Caco-2 (cell line): ENCODE measurements at regions of chr11 and their contacts with region 1.

Region 1: DNA sequence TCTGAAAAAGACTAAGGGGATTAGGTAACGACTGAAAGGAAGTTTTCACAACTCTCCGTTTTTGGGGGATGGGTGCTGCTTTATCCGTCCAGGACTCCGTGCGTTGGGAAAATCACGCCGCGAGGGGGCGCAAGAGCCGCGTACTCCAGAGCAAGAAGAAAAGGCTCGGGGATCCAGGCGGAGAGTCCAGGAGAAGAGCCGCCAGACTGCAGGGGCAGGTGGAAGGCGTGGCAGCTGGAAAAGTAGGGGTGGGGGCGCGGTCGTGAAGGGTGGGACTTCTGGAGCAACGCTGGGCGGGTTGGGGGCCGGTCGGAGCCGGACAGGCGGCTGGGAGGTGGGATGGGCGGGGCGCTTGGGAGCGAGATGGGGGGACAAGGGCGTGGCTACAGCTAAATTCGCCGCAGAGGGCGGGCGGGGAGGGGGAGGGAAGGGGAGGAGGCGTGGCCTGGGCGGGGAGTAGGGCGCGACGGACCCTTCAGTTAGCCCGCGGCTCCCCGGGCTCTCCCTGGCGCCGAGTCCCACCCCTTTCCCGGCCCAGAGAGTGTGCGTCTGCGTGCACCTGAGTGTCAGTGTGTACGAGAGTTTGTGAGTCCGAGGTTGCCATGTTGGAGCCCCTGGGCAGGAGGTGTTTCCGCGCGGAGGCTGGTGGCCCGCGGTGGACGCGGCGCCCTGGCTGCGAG is 613 bp upstream of the ARHGEF17 start:
- DNase-seq: peak; percentile 100
- H3K4me3 ChIP-seq: peak overlapping the region; percentile 94
- H3K4me3 Mint-ChIP-seq: peak overlapping the region; percentile 76
- H3K27ac Mint-ChIP-seq: peak overlapping the region; percentile 87
- H3K4me1 ChIP-seq: peaks cover 31% of the 10 kb centered on the region
- H3K4me1 Mint-ChIP-seq: peaks cover 32% of the 10 kb centered on the region
- H3K27me3 ChIP-seq: no peaks in the 10 kb centered on the region
- H3K27me3 Mint-ChIP-seq: no peaks in the 10 kb centered on the region
- CTCF ChIP-seq: peak; percentile 96 to 98

Region 2: GRCh38 chr11:72848846-72849466 is 458.5 kb before region 1 on chr11:
- CTCF ChIA-PET with region 1: no interaction called
- POLR2A ChIA-PET with region 1: no interaction called
- intact Hi-C with region 1: no loop called
- DNase-seq: peak in 1 of 2 experiments; percentile 72
- H3K4me3 ChIP-seq: no peak overlapping the region
- H3K4me3 Mint-ChIP-seq: no peak overlapping the region
- H3K27ac Mint-ChIP-seq: no peak overlapping the region
- H3K4me1 ChIP-seq: no peaks in the 10 kb centered on the region
- H3K4me1 Mint-ChIP-seq: no peaks in the 10 kb centered on the region
- H3K27me3 ChIP-seq: no peaks in the 10 kb centered on the region
- H3K27me3 Mint-ChIP-seq: no peaks in the 10 kb centered on the region
- CTCF ChIP-seq: peak; percentile 90 to 93

Region 3: DNA sequence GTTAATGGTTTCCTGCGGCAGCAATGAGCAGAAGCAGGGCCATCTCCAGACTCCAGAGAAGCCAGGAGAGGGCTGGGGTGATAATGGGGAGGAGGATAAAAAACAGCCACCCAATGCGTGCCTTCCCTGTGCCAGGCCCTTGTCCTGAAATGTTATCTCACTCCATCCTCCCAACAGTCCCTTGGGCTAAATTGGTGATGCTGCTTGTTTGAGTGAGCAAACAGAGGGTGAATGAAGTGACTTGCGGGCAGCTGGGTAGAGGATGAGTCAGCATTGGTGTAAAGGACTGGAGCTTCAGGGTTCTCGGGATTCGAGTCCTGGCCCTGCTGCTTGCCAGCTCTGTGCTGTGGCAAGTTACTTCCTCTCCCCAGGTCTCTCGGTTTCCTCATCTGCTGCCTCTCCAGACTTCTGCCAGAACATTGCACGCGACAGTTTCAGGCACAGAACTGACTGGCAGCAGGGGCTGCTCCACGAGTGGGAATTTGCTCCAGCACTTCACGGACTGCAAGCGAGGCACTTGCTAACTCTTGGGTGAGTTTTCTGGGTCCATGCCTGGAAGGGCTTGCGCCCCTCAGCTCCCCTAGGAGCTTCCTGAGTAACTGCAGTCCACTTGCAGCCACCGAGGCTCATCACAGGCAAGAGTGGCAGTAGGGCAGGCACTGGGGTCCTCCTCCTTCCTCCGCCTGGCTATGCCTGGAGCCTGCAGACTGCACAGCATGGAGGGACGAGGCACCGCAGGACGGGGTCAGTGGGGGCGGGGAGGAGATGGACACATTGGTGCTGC is 35.3 kb before region 1 on chr11 and contains the start of gene P2RY6:
- CTCF ChIA-PET with region 1: interaction called, 6 read pairs
- POLR2A ChIA-PET with region 1: interaction called, 11 read pairs
- intact Hi-C with region 1: loop called (anchors 1 kb)
- DNase-seq: peak; percentile 88 to 93
- H3K4me3 ChIP-seq: peak within 1 kb of the TSS; percentile 38
- H3K4me3 Mint-ChIP-seq: peak within 1 kb of the TSS; percentile 80
- H3K27ac Mint-ChIP-seq: peak within 1 kb of the TSS; percentile 99
- H3K4me1 ChIP-seq: peaks cover 79% of the 10 kb centered on the region
- H3K4me1 Mint-ChIP-seq: peaks cover 81% of the 10 kb centered on the region
- H3K27me3 ChIP-seq: no peaks in the 10 kb centered on the region
- H3K27me3 Mint-ChIP-seq: no peaks in the 10 kb centered on the region
- CTCF ChIP-seq: no peak
- total RNA-seq, gene P2RY6: 48.4 and 55.7 TPM in 2 replicates

Region 4: GRCh38 chr11:73295231-73295995 is 12.1 kb before region 1 on chr11:
- CTCF ChIA-PET with region 1: interaction called, 19 read pairs
- POLR2A ChIA-PET with region 1: interaction called, 4 read pairs
- intact Hi-C with region 1: no loop called
- DNase-seq: peak; percentile 73 to 86
- H3K4me3 ChIP-seq: no peak overlapping the region
- H3K4me3 Mint-ChIP-seq: no peak overlapping the region
- H3K27ac Mint-ChIP-seq: no peak overlapping the region
- H3K4me1 ChIP-seq: peaks cover 23% of the 10 kb centered on the region
- H3K4me1 Mint-ChIP-seq: peaks cover 10% of the 10 kb centered on the region
- H3K27me3 ChIP-seq: no peaks in the 10 kb centered on the region
- H3K27me3 Mint-ChIP-seq: no peaks in the 10 kb centered on the region
- CTCF ChIP-seq: peak; percentile 95 to 97

Region 5: GRCh38 chr11:73335204-73335923 is 27.9 kb after region 1 on chr11:
- CTCF ChIA-PET with region 1: interaction called, 285 read pairs
- POLR2A ChIA-PET with region 1: interaction called, 36 read pairs
- intact Hi-C with region 1: loop called (anchors 1 kb)
- DNase-seq: peak; percentile 91 to 96
- H3K4me3 ChIP-seq: no peak overlapping the region
- H3K4me3 Mint-ChIP-seq: no peak overlapping the region
- H3K27ac Mint-ChIP-seq: peak overlapping the region; percentile 19
- H3K4me1 ChIP-seq: peaks cover 52% of the 10 kb centered on the region
- H3K4me1 Mint-ChIP-seq: peaks cover 36% of the 10 kb centered on the region
- H3K27me3 ChIP-seq: no peaks in the 10 kb centered on the region
- H3K27me3 Mint-ChIP-seq: no peaks in the 10 kb centered on the region
- CTCF ChIP-seq: peak; percentile 100

Region 6: GRCh38 chr11:73360336-73361013 is 53.0 kb after region 1 on chr11:
- CTCF ChIA-PET with region 1: interaction called, 62 read pairs
- POLR2A ChIA-PET with region 1: interaction called, 18 read pairs
- intact Hi-C with region 1: loop called (anchors 1 kb)
- DNase-seq: peak; percentile 74 to 86
- H3K4me3 ChIP-seq: no peak overlapping the region
- H3K4me3 Mint-ChIP-seq: no peak overlapping the region
- H3K27ac Mint-ChIP-seq: no peak overlapping the region
- H3K4me1 ChIP-seq: no peaks in the 10 kb centered on the region
- H3K4me1 Mint-ChIP-seq: no peaks in the 10 kb centered on the region
- H3K27me3 ChIP-seq: no peaks in the 10 kb centered on the region
- H3K27me3 Mint-ChIP-seq: no peaks in the 10 kb centered on the region
- CTCF ChIP-seq: peak; percentile 92 to 95

Region 7: DNA sequence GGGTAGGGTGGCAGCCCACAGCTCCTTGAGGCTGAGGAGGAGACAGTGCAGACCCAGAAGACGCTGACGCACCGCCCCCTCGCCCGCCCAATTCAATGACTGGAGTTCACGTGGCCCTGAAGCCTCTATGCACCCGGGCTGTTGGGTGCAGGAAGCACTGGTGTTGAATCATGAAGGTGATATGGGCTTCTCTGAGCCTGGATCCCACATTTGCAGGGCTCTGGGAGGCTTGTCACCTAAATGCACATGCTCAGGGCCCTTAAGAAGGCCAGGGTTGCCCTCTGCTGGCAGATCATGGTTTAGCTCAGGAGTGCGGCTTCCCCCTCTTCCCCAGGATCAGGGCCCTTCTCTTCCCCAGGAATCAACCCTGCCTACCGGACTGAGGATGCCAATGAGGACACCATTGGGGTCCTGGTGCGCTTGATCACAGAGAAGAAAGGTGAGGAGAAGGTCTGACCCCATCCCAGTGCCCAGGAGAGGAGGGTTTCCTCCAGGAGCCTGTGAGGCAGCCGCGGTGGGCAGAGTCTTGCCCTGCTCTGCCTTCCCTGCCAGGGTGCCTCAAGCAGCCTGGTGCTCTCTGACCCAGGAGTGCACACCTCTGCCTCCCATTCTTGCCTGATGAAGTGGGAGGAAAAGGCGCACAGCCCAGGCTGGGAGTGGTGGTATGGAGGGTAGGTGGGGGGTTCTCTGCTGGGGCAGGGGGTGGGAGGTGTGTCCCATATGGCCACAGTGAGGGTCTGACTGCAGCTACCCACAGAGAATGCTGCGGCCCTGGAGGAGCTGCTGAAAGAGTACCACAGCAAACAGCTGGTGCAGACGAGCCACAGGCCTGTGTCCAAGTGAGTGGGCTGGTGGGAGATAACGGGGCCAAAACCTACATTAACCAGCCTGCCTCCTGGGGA is 86.3 kb after region 1 on chr11:
- CTCF ChIA-PET with region 1: interaction called, 20 read pairs
- POLR2A ChIA-PET with region 1: no interaction called
- intact Hi-C with region 1: loop called (anchors 1 kb)
- DNase-seq: peak; percentile 85 to 89
- H3K4me3 ChIP-seq: no peak overlapping the region
- H3K4me3 Mint-ChIP-seq: no peak overlapping the region
- H3K27ac Mint-ChIP-seq: no peak overlapping the region
- H3K4me1 ChIP-seq: no peaks in the 10 kb centered on the region
- H3K4me1 Mint-ChIP-seq: no peaks in the 10 kb centered on the region
- H3K27me3 ChIP-seq: no peaks in the 10 kb centered on the region
- H3K27me3 Mint-ChIP-seq: no peaks in the 10 kb centered on the region
- CTCF ChIP-seq: peak; percentile 92 to 97